Ovary (tissue), 10 donors: ENCODE measurements at regions of chr7 and their contacts with region 1.

Region 1: DNA sequence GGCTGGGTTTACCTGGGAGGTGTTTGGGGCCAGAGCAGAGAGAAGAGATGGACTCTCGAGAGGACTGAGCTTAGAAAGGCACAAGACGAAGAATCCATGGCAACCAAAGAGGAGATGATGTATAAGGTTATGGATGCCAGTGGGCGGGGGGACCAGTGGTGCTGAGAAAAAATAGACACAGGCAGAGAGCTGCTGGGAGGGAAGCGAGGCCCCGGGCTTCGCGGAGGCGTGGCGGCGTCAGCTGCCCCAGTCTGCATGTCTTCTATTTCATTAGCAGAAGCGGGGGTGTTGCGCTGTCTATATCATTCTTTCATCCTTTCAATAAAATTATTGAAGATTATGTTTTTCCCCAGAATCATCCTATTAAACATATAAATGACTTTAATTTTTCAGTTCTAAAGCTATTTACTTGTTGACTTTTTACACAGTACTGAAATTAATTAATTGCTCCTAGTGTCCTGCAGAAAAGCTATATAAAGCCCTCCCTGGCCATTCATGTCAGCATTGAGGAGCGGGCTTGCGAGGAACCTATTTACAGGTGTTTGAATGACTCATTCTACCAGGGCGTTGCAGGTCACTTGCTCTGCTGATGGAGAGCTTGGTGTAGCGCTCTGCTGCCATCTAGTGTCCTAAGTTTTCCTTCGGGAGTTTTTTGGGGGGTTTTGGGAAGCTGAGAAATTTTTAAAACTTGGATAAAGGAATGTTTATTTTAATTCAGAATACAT is 42.9 kb upstream of the BHLHA15 start:
- DNase-seq: peak in 4 of 5 donors; percentile 49 to 69 (median 58)
- H3K4me3 ChIP-seq: no peak overlapping the region
- H3K27ac ChIP-seq: no peak overlapping the region
- H3K4me1 ChIP-seq: peaks cover 5% of the 10 kb centered on the region
- H3K27me3 ChIP-seq: no peaks in the 10 kb centered on the region
- CTCF ChIP-seq: peak; percentile 55 to 58 (median 57)
- EP300 ChIP-seq: no peak
- POLR2A ChIP-seq: no peak

Region 2: DNA sequence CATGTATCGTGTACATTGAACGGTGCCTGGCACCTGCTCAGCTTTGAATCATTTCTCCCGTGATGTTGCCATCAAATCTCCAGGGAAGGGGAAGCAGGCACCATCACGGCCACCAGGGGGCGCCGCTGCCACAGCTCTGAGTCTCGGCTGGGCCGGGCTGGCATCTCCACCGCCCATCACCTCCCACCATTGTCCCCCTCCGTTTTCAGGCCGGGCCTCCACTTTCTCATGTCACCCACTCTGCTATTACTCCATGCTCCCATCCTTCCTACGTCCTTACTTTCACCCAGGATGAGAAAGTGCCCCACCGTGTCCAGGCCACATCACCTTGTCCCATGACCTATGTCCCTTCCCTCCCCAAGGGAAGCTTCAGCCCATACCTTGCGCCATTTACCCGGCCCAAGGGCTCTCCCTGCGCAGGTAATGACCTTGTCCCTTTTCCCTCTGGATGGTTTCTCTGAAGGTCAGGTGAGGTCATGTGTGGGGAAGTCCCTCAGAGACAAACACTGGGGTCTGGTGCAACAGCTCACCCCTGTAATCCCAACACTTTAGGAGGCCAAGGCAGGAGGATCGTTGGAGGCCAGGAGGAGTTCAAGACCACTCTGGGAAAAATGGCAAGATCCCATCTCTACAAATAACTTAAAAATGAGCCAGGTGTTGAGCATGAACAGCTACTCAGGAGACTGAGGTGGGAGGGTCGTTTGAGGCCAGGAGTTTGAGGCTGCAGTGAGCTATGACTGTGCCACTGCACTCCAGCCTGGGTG is 146.6 kb before region 1 on chr7:
- intact Hi-C with region 1: loop called in 3 of 4 experiments (anchors 5 to 10 kb)
- DNase-seq: peak; percentile 39 to 80 (median 70)
- H3K4me3 ChIP-seq: no peak overlapping the region
- H3K27ac ChIP-seq: no peak overlapping the region
- H3K4me1 ChIP-seq: no peaks in the 10 kb centered on the region
- H3K27me3 ChIP-seq: no peaks in the 10 kb centered on the region
- CTCF ChIP-seq: peak; percentile 43 to 66 (median 49)
- EP300 ChIP-seq: no peak
- POLR2A ChIP-seq: no peak

Region 3: DNA sequence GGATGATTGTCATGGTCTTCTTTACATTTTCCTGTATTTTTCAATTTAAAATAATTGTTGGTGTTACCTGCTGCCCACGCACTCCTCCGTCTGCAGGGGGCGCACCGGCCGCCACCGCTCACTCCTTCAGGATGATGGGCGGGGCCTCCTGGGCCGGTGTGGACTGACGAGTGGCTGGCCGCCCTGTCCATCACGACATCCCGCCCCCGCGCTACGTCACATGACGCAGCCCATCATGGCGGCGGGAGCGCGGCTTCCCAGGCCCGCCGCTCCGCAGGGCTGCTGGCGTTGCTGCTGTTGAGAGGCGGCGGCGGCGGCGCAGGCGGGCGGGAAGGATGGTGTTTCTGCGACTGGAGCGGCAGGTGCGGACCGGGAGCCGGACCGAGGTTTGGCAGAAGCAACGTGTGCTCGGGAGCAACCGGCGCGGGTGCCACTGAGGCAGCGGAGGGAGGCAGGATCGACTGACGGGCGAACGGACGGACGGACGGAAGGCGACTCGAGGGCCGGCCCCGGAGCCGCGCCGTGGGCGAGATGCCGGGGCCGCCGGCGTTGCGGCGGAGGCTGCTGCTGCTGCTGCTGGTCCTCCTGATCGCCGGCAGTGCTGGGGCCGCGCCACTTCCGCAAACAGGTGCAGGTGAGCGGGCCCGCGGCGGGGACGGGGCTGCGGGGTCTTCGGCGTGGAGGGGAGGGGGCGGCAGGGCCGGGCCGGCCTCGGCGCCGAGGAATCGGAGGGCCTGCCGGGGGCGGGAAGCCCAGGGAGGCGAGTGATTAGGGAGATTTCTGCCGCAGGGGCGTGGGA is 61.5 kb before region 1 on chr7 and contains the start of gene LMTK2:
- intact Hi-C with region 1: loop called (anchors 5 kb)
- DNase-seq: peak; percentile 91 to 99 (median 96)
- H3K4me3 ChIP-seq: peak within 1 kb of the TSS; percentile 99
- H3K27ac ChIP-seq: peak within 1 kb of the TSS; percentile 33 to 68
- H3K4me1 ChIP-seq: peaks cover 3% of the 10 kb centered on the region
- H3K27me3 ChIP-seq: no peaks in the 10 kb centered on the region
- CTCF ChIP-seq: peak; percentile 94 to 99 (median 98)
- EP300 ChIP-seq: no peak
- POLR2A ChIP-seq: peak; percentile 90
- total RNA-seq, gene LMTK2: 12.0 to 17.1 (median 13.6) TPM

Region 4: DNA sequence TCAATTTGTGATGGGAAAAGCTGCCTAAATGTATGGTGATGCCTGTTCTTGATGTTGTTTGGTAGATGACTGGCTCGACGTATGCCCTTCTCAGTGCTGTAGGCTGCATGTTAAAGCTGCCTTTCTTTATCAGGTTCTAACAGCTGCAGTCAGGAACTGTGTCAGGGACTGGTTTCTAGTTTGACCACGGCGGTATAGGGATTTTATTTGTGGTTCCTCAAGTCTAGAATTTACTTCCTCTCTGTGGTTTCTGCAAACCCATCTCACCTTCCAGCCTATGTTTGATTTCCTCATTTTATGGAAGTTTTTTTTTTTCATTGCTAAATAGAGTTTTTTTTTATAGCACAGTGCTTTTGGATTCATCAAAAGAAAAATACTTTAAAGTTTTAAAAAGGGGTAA is 35.2 kb before region 1 on chr7:
- intact Hi-C with region 1: no loop called
- DNase-seq: no peak
- H3K4me3 ChIP-seq: no peak overlapping the region
- H3K27ac ChIP-seq: no peak overlapping the region
- H3K4me1 ChIP-seq: peaks cover 11% of the 10 kb centered on the region
- H3K27me3 ChIP-seq: no peaks in the 10 kb centered on the region
- CTCF ChIP-seq: no peak
- EP300 ChIP-seq: no peak
- POLR2A ChIP-seq: no peak